GM12878 (cell line): ENCODE measurements at regions of chrX and their contacts with region 1.

Region 1: GRCh38 chrX:123422877-123423276 is 238.8 kb downstream of the GRIA3 start:
- DNase-seq: no peak
- ATAC-seq: peak; percentile 77
- H3K4me3 ChIP-seq: no peak overlapping the region
- H3K27ac ChIP-seq: no peak overlapping the region
- H3K4me1 ChIP-seq: peaks cover 4% of the 10 kb centered on the region; the same call in 1 of the 2 replicates
- H3K27me3 ChIP-seq: no peaks in the 10 kb centered on the region
- CTCF ChIP-seq: peak; percentile 60 to 78 (median 69)
- EP300 ChIP-seq: no peak
- POLR2A ChIP-seq: no peak
- RAD21 ChIP-seq: peak; percentile 87

Region 2: GRCh38 chrX:123173833-123174232 is 249.0 kb before region 1 on chrX:
- CTCF ChIA-PET with region 1: interaction called, 89 read pairs
- POLR2A ChIA-PET with region 1: no interaction called
- RAD21 ChIA-PET with region 1: interaction called, 55 read pairs
- SMC1A ChIA-PET with region 1: interaction called, 53 read pairs
- in situ Hi-C with region 1: no loop called
- intact Hi-C with region 1: loop called (anchors 2 kb)
- DNase-seq: no peak
- ATAC-seq: peak; percentile 70
- H3K4me3 ChIP-seq: no peak overlapping the region
- H3K27ac ChIP-seq: no peak overlapping the region
- H3K4me1 ChIP-seq: no peaks in the 10 kb centered on the region
- H3K27me3 ChIP-seq: no peaks in the 10 kb centered on the region
- CTCF ChIP-seq: peak; percentile 16 to 39 (median 18); a peak in 3 of 6 replicates
- EP300 ChIP-seq: no peak
- POLR2A ChIP-seq: no peak
- RAD21 ChIP-seq: peak; percentile 41

Region 3: GRCh38 chrX:123201720-123202119 is 221.2 kb before region 1 on chrX:
- CTCF ChIA-PET with region 1: interaction called, 53 read pairs
- POLR2A ChIA-PET with region 1: no interaction called
- RAD21 ChIA-PET with region 1: interaction called, 16 read pairs
- SMC1A ChIA-PET with region 1: interaction called, 36 read pairs
- in situ Hi-C with region 1: no loop called
- intact Hi-C with region 1: no loop called
- DNase-seq: no peak
- ATAC-seq: no peak
- H3K4me3 ChIP-seq: no peak overlapping the region
- H3K27ac ChIP-seq: no peak overlapping the region
- H3K4me1 ChIP-seq: no peaks in the 10 kb centered on the region
- H3K27me3 ChIP-seq: no peaks in the 10 kb centered on the region
- CTCF ChIP-seq: no peak
- EP300 ChIP-seq: no peak
- POLR2A ChIP-seq: no peak
- RAD21 ChIP-seq: no peak

Region 4: GRCh38 chrX:123277821-123278423 is 145.0 kb before region 1 on chrX:
- CTCF ChIA-PET with region 1: interaction called, 128 read pairs
- POLR2A ChIA-PET with region 1: no interaction called
- RAD21 ChIA-PET with region 1: interaction called, 52 read pairs
- SMC1A ChIA-PET with region 1: interaction called, 122 read pairs
- in situ Hi-C with region 1: no loop called
- intact Hi-C with region 1: loop called (anchors 1 kb)
- DNase-seq: no peak
- ATAC-seq: peak; percentile 59
- H3K4me3 ChIP-seq: no peak overlapping the region
- H3K27ac ChIP-seq: no peak overlapping the region
- H3K4me1 ChIP-seq: no peaks in the 10 kb centered on the region
- H3K27me3 ChIP-seq: no peaks in the 10 kb centered on the region
- CTCF ChIP-seq: peak; percentile 11 to 21 (median 11); a peak in 3 of 6 replicates
- EP300 ChIP-seq: no peak
- POLR2A ChIP-seq: no peak
- RAD21 ChIP-seq: peak; percentile 28; the same call in 1 of the 2 replicates

Region 5: GRCh38 chrX:123324625-123325024 is 98.3 kb before region 1 on chrX:
- CTCF ChIA-PET with region 1: interaction called, 57 read pairs
- POLR2A ChIA-PET with region 1: interaction called, 7 read pairs
- RAD21 ChIA-PET with region 1: interaction called, 40 read pairs
- SMC1A ChIA-PET with region 1: interaction called, 52 read pairs
- in situ Hi-C with region 1: no loop called
- intact Hi-C with region 1: no loop called
- DNase-seq: no peak
- ATAC-seq: peak; percentile 76
- H3K4me3 ChIP-seq: no peak overlapping the region
- H3K27ac ChIP-seq: no peak overlapping the region
- H3K4me1 ChIP-seq: no peaks in the 10 kb centered on the region
- H3K27me3 ChIP-seq: no peaks in the 10 kb centered on the region
- CTCF ChIP-seq: no peak
- EP300 ChIP-seq: no peak
- POLR2A ChIP-seq: no peak
- RAD21 ChIP-seq: no peak

Region 6: GRCh38 chrX:123339221-123339905 is 83.5 kb before region 1 on chrX:
- CTCF ChIA-PET with region 1: interaction called, 33 read pairs
- POLR2A ChIA-PET with region 1: interaction called, 4 read pairs
- RAD21 ChIA-PET with region 1: interaction called, 16 read pairs
- SMC1A ChIA-PET with region 1: interaction called, 34 read pairs
- in situ Hi-C with region 1: no loop called
- intact Hi-C with region 1: no loop called
- DNase-seq: no peak
- ATAC-seq: peak; percentile 84
- H3K4me3 ChIP-seq: no peak overlapping the region
- H3K27ac ChIP-seq: no peak overlapping the region
- H3K4me1 ChIP-seq: no peaks in the 10 kb centered on the region
- H3K27me3 ChIP-seq: no peaks in the 10 kb centered on the region
- CTCF ChIP-seq: no peak
- EP300 ChIP-seq: peak in 1 of 2 experiments; percentile 53; a peak in 1 of 4 replicates
- POLR2A ChIP-seq: no peak
- RAD21 ChIP-seq: no peak

Region 7: GRCh38 chrX:123399709-123400108 is 23.2 kb before region 1 on chrX:
- CTCF ChIA-PET with region 1: interaction called, 115 read pairs
- POLR2A ChIA-PET with region 1: no interaction called
- RAD21 ChIA-PET with region 1: interaction called, 5 read pairs
- SMC1A ChIA-PET with region 1: interaction called, 172 read pairs
- in situ Hi-C with region 1: no loop called
- intact Hi-C with region 1: no loop called
- DNase-seq: no peak
- ATAC-seq: no peak
- H3K4me3 ChIP-seq: no peak overlapping the region
- H3K27ac ChIP-seq: no peak overlapping the region
- H3K4me1 ChIP-seq: no peaks in the 10 kb centered on the region
- H3K27me3 ChIP-seq: no peaks in the 10 kb centered on the region
- CTCF ChIP-seq: no peak
- EP300 ChIP-seq: no peak
- POLR2A ChIP-seq: no peak
- RAD21 ChIP-seq: no peak

Region 8: GRCh38 chrX:123504047-123504446 is 81.2 kb after region 1 on chrX:
- CTCF ChIA-PET with region 1: no interaction called
- POLR2A ChIA-PET with region 1: no interaction called
- RAD21 ChIA-PET with region 1: no interaction called
- SMC1A ChIA-PET with region 1: no interaction called
- in situ Hi-C with region 1: no loop called
- intact Hi-C with region 1: no loop called
- DNase-seq: no peak
- ATAC-seq: no peak
- H3K4me3 ChIP-seq: no peak overlapping the region
- H3K27ac ChIP-seq: no peak overlapping the region
- H3K4me1 ChIP-seq: no peaks in the 10 kb centered on the region
- H3K27me3 ChIP-seq: no peaks in the 10 kb centered on the region
- CTCF ChIP-seq: no peak
- EP300 ChIP-seq: no peak
- POLR2A ChIP-seq: no peak
- RAD21 ChIP-seq: no peak

Region 9: DNA sequence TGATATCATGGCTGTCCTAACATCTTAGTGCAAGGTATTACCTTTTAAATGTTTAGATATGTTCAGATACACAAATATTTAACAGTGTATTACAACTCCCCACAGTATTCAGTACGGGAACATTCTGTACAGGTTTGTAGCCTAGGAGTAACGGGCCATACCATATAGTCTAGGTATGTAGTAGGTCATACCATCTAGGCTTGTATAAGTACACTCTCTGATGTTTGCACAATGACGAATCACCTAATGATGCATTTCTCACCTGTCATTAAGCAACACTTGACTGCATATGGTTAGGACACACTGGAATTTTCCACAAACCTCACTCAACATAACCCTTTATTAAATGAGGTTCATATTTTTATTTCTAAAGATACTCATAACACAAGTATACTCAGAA is 242.3 kb after region 1 on chrX:
- CTCF ChIA-PET with region 1: no interaction called
- POLR2A ChIA-PET with region 1: no interaction called
- RAD21 ChIA-PET with region 1: no interaction called
- SMC1A ChIA-PET with region 1: no interaction called
- in situ Hi-C with region 1: no loop called
- intact Hi-C with region 1: no loop called
- DNase-seq: no peak
- ATAC-seq: no peak
- H3K4me3 ChIP-seq: no peak overlapping the region
- H3K27ac ChIP-seq: no peak overlapping the region
- H3K4me1 ChIP-seq: no peaks in the 10 kb centered on the region
- H3K27me3 ChIP-seq: no peaks in the 10 kb centered on the region
- CTCF ChIP-seq: no peak
- EP300 ChIP-seq: no peak
- POLR2A ChIP-seq: no peak
- RAD21 ChIP-seq: no peak